ENCODE measurements at regions of chr22 and their contacts with region 1.

Region 1: DNA sequence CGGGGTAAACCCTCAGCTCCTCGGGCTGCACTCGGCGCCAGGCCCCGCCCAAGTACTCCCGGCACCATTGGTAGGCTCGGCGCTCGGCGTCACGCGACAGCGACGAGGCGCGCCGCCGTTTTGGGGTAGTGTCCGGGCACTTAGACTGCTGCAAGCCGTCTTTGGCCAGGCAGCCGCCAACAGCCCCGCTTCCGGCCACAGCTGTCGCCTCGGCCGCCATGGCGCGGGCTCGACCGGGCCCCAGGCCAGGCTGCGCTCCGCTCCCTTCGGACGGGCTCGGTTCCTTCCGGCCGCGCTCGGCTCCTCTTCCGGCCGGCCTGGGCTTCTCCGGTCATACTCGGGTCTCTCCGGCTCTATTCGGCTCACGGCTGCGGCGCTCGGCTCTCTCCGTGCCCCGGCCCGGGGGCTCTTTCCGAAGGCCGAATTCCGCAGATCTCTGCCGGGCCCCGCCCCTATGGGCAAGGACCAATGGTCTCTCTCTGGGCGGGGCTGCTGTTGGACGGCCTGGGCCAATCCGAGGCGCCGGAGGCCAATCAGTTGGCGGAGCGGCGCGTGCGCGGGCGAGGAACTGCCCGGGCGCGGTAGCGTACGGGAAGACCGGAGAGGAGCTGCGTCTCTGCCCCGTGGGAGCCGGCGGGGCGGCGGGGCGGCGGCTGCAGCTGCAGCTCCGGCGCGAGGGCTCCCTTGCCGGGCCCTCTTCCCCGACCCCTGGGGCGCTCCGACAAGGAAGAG is at the start of gene CHKB:
- DNase-seq: peak; percentile 99
- H3K4me3 Mint-ChIP-seq: peak within 1 kb of the TSS; percentile 81
- H3K27ac Mint-ChIP-seq: peak within 1 kb of the TSS; percentile 93
- H3K4me1 Mint-ChIP-seq: peaks cover 34% of the 10 kb centered on the region
- H3K27me3 Mint-ChIP-seq: no peaks in the 10 kb centered on the region
- total RNA-seq, gene CHKB: 101 to 111 TPM

Region 2: DNA sequence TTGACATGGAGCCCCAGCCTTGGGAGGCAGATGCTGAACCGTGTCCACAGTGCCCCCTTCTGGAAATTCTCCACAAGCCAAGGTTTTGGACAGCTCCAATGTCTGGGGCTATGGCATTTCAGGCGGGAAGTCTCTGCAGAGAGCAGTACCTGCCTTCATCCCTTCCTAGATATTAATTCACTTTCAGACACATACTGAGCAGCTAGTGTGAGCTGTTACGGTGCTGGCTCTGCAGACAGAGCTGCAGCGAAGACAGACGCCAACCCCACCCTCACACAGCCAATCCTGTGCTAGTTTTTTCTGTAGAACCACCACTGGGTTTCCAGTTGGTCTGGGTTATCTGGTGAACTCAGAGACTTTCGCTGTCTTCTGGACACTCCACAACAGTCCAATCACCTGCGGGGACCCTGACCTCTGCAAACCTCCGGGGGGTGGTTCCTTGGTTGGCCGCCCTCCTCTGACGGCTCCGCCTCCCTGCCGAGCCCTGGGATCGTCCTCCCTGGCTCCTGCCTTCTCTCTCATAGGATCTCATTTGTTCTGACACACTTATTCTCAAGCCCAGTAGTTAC is 84.3 kb before region 1 on chr22:
- CTCF ChIA-PET with region 1: no interaction called
- POLR2A ChIA-PET with region 1: no interaction called
- DNase-seq: peak; percentile 78
- H3K4me3 Mint-ChIP-seq: no peak overlapping the region
- H3K27ac Mint-ChIP-seq: no peak overlapping the region
- H3K4me1 Mint-ChIP-seq: peaks cover 2% of the 10 kb centered on the region
- H3K27me3 Mint-ChIP-seq: no peaks in the 10 kb centered on the region

Region 3: DNA sequence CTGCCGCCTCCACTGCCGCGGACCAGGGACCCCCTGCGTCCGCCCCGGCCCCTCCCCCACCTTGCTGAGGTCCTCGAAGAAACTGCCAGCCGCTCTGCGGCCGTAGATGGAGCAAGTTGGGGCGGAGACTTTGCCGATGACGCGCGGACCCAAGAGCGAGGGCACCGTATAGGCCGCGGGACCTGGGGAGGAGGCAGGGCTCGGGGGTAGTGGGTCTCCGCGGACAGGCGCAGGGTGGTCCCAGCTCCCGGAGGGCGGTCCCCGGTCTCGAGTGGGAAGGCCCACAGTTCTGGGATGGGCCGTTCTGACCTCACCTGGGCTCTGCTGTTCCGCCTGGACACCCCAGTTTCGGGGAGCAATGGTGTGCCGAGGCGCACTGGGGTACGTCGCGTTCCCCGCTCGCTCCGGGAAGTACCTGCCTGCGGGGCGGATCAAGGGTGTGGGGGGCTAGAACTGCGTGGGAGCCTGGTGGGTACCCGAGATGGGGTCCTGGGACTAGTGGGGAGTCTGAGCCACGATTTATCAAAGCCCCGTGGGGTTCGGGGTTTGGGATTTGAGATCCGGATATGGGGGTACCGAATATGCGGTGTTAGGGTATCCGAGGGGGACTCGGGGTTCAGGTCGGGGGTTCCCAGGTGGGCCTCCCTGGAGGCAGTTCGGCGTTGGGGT is 51.7 kb before region 1 on chr22:
- CTCF ChIA-PET with region 1: interaction called, 9 read pairs
- POLR2A ChIA-PET with region 1: interaction called, 51 read pairs
- DNase-seq: peak; percentile 90
- H3K4me3 Mint-ChIP-seq: peak overlapping the region; percentile 95
- H3K27ac Mint-ChIP-seq: peak overlapping the region; percentile 98
- H3K4me1 Mint-ChIP-seq: peaks cover 53% of the 10 kb centered on the region
- H3K27me3 Mint-ChIP-seq: no peaks in the 10 kb centered on the region